ENCODE measurements at regions of chr4 and their contacts with region 1.

Region 1: GRCh38 chr4:40149960-40150385 is 46.9 kb upstream of the RHOH start:
- DNase-seq: peak; percentile 67
- H3K4me3 Mint-ChIP-seq: no peak overlapping the region
- H3K27ac Mint-ChIP-seq: peak overlapping the region; percentile 48
- H3K4me1 Mint-ChIP-seq: no peaks in the 10 kb centered on the region
- H3K27me3 Mint-ChIP-seq: no peaks in the 10 kb centered on the region

Region 2: DNA sequence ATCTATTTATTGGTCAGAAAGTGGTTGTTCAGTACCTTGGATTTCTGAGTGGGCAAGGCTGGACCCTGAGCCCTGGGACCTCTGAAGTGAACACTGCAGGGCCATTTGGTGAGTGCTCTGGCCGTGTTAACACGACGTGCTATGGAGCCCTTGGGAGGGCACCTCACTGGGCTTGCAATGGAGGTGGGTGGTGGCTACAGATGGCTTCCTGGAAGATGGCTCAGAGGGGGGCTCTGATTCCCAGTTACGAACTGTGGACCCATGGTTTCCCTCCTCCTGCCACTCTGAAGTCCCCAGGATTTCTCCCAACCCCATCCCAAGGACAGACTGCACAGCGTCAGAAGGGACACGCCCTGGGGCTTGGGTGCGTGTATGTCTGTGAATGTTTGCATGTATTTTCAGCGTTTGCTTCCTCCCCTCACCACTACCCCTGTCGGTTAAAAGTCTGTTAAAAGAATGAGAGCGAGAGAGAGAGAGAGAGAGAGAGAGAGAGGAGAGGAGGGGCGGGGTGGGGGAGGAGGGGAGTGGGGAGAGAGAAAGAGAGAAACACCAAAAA is 43.1 kb after region 1 on chr4:
- intact Hi-C with region 1: loop called (anchors 1 kb)
- DNase-seq: no peak
- H3K4me3 Mint-ChIP-seq: peak overlapping the region; percentile 84
- H3K27ac Mint-ChIP-seq: peak overlapping the region; percentile 99
- H3K4me1 Mint-ChIP-seq: peaks cover 79% of the 10 kb centered on the region
- H3K27me3 Mint-ChIP-seq: no peaks in the 10 kb centered on the region

Region 3: GRCh38 chr4:40325189-40326019 is 175.4 kb after region 1 on chr4:
- intact Hi-C with region 1: loop called (anchors 1 kb)
- DNase-seq: peak; percentile 54
- H3K4me3 Mint-ChIP-seq: no peak overlapping the region
- H3K27ac Mint-ChIP-seq: no peak overlapping the region
- H3K4me1 Mint-ChIP-seq: peaks cover 29% of the 10 kb centered on the region
- H3K27me3 Mint-ChIP-seq: no peaks in the 10 kb centered on the region

Region 4: DNA sequence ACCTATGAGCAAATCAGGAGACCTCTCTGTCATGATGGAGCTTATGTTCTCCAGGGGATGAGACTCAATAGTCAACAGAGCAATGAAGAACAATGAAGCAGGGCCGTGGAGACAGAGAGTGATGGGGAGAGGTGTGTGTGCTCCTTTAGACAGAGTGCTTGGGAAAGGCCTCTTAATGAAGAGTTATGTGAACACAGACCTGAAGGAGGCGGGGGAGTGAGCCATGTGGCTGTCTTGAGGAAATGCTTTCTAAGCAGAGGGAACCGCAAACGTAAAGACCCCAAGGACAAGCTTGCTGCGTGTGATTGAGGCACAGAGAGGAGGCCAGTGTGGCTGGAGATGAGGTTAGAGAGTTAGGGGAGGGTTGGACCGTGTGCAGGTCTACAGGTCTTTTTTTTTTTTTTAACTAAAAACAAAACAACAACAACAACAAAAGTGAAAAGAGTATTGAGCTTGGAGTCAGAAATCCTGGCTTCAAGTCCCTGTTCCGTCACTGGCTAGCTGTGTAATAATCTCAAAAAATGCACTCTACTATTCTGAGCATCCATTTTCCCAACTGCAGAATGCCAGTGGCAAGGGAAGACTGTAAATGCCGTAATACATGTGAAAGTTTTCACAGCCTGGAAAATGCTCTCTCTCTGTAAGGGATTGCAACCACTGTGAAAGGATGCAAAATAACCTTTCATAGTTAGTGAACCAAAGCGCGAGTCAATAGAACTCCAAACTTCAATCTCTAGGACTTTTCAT is 238.4 kb after region 1 on chr4:
- intact Hi-C with region 1: no loop called
- DNase-seq: no peak
- H3K4me3 Mint-ChIP-seq: no peak overlapping the region
- H3K27ac Mint-ChIP-seq: no peak overlapping the region
- H3K4me1 Mint-ChIP-seq: peaks cover under 1% of the 10 kb centered on the region
- H3K27me3 Mint-ChIP-seq: peaks cover 13% of the 10 kb centered on the region

Region 5: DNA sequence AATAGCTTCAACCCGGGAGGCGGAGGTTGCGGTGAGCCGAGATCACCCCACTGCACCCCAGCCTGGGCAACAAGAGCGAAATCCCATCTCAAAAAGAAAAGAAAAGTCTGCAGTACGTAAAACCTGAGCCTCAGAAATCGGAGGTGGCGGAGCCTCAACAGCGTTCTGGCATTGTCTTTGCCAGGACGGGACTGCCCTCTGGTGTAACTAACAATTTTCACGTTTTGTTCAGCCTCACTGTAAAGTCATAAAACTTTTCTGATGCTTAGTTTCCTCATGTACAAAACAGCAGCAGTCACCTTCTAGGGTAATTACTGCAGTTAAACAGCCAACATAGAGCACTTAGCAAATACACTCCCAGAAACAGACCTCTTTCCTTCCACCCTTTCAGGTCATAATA is 358.0 kb after region 1 on chr4:
- intact Hi-C with region 1: loop called (anchors 5 kb)
- DNase-seq: no peak
- H3K4me3 Mint-ChIP-seq: no peak overlapping the region
- H3K27ac Mint-ChIP-seq: no peak overlapping the region
- H3K4me1 Mint-ChIP-seq: peaks cover 10% of the 10 kb centered on the region
- H3K27me3 Mint-ChIP-seq: no peaks in the 10 kb centered on the region

Region 6: GRCh38 chr4:40840985-40841571 is 691.1 kb after region 1 on chr4:
- intact Hi-C with region 1: loop called (anchors 5 kb)
- DNase-seq: peak; percentile 59
- H3K4me3 Mint-ChIP-seq: no peak overlapping the region
- H3K27ac Mint-ChIP-seq: no peak overlapping the region
- H3K4me1 Mint-ChIP-seq: peaks cover 8% of the 10 kb centered on the region
- H3K27me3 Mint-ChIP-seq: peaks cover 3% of the 10 kb centered on the region